Activated naive CD4-positive, alpha-beta T cell treated with anti-CD3 and anti-CD28 coated beads for 36 hours (primary cell): ENCODE measurements at regions of chr7 and their contacts with region 1.

Region 1: GRCh38 chr7:146948703-146949102 is 832.1 kb downstream of the CNTNAP2 start:
- DNase-seq: no peak
- H3K4me3 Mint-ChIP-seq: no peak overlapping the region
- H3K27ac Mint-ChIP-seq: no peak overlapping the region
- H3K4me1 Mint-ChIP-seq: no peaks in the 10 kb centered on the region
- H3K27me3 Mint-ChIP-seq: no peaks in the 10 kb centered on the region

Region 2: DNA sequence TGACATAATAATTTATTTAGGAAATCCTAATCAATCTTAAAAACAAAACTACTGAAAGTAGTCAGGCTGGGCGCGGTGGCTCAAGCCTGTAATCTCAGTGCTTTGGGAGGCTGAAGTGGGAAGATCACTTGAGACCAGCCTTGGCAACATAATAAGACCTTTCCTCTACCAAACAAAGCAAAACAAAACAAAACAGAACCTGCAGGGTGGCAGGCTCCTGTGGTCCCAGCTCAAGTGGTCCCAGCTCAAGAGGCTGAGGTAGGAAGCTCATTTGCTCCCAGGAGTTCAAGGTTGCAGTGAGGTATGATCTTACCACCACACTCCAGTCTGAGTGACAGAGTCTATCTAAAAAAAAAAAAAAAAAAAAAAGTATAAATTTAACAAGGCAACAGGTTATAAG is 84.1 kb before region 1 on chr7:
- CTCF ChIA-PET with region 1: no interaction called
- intact Hi-C with region 1: no loop called
- DNase-seq: no peak
- H3K4me3 Mint-ChIP-seq: no peak overlapping the region
- H3K27ac Mint-ChIP-seq: no peak overlapping the region
- H3K4me1 Mint-ChIP-seq: no peaks in the 10 kb centered on the region
- H3K27me3 Mint-ChIP-seq: no peaks in the 10 kb centered on the region

Region 3: GRCh38 chr7:146889806-146890555 is 58.7 kb before region 1 on chr7:
- CTCF ChIA-PET with region 1: no interaction called
- intact Hi-C with region 1: loop called (anchors 10 kb)
- DNase-seq: no peak
- H3K4me3 Mint-ChIP-seq: no peak overlapping the region
- H3K27ac Mint-ChIP-seq: no peak overlapping the region
- H3K4me1 Mint-ChIP-seq: no peaks in the 10 kb centered on the region
- H3K27me3 Mint-ChIP-seq: no peaks in the 10 kb centered on the region

Region 4: GRCh38 chr7:147197006-147197405 is 248.3 kb after region 1 on chr7:
- CTCF ChIA-PET with region 1: no interaction called
- intact Hi-C with region 1: no loop called
- DNase-seq: no peak
- H3K4me3 Mint-ChIP-seq: no peak overlapping the region
- H3K27ac Mint-ChIP-seq: no peak overlapping the region
- H3K4me1 Mint-ChIP-seq: no peaks in the 10 kb centered on the region
- H3K27me3 Mint-ChIP-seq: no peaks in the 10 kb centered on the region